Endothelial cell of umbilical vein (primary cell): ENCODE measurements at regions of chr15 and their contacts with region 1.

Region 1: DNA sequence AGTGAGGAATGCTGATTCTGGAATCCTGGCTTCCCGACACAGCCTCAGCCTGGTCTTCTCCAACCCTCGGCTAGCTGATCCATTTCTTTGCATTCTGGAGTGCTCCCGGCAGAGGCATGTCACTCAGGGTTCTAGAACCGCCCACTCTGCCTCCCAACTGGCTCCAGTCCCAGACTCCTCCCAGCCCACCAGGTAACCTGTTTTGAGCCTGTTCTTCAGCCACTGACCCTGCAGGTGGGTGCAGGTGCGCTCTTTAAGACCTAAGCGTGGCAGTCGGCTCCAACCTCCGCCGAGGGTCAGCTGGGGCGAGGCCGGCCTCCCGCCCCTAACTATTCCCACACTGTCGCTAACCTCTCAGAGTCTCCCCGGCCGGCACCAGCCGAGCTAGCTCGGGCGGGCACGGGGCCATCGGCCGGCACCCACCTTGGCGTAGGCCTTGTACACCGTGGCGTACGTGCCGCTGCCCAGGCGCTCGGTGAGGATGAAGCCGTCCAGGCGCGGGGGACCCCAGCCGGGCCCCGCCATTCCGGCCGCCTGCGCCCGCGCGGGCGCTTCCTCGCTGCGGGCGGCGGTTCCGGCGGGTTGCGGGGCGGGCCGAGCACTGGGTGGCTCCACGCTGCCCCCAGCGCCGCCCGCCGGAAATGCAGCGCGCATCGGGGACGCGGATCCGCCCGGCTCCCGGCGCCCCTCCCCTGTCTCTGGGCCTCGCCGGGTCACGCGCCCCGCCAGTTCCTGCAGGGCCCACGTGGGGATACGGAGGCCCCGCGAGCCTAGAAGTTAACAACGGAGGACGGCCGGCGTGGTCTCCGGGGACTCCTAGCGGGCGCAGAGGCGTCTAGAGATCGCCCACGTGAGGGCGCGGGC is at the start of gene ULK3:
- DNase-seq: peak; percentile 81
- H3K4me3 ChIP-seq: peak within 1 kb of the TSS; percentile 61 to 81 (median 71)
- H3K27ac ChIP-seq: peak within 1 kb of the TSS; percentile 60
- H3K4me1 ChIP-seq: peaks cover 11% of the 10 kb centered on the region
- H3K27me3 ChIP-seq: no peaks in the 10 kb centered on the region
- CTCF ChIP-seq: peak; percentile 36 to 57
- POLR2A ChIP-seq: peak; percentile 88
- total RNA-seq, gene ULK3: 29.0 and 36.0 TPM in 2 replicates

Region 2: DNA sequence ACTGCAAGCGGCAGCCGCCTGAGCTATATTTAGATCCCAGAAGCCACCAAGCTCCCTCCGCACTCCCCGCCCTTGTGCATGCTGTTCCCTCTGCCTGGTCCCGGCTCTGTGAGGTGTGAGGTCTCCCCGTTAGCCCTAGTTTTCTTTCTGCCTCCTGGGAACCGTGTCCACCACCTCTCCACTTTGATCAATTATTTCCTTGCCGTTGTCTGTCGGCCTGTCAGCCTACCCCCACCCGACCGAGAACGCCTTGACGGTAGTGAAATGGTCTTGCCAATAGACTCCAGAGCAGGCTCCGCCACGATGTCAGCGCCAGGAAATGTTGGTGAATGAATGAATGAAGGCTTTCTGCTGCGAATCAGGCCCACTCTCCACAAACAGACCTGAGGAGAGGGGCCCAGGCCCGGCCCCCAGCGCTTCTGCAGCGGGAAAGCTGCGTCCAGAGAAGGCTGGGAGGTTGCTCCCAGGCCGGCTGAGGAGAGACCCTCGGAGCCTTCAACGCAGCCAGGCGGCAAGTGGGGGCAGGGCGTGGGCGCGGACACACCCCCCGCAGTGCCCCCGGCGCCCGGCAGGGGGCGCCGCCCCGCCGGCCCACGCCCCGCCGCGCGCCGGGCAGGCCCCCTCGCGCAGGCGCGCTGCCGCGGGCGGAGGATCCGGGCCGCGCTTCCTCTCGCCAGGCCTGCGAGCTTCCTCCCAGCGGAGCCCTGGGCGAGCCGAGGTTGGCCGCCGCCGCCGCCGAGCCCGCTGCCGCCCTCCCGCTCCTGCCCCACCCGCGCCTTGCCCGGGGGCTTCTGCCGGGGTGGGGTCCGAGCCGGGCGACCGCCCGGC is 61.2 kb before region 1 on chr15 and contains the start of gene CSK:
- CTCF ChIA-PET with region 1: interaction called, 3 read pairs
- POLR2A ChIA-PET with region 1: interaction called, 4 read pairs
- dilution Hi-C with region 1: no loop called
- intact Hi-C with region 1: loop called (anchors 2 kb)
- DNase-seq: peak; percentile 53
- H3K4me3 ChIP-seq: peak within 1 kb of the TSS; percentile 88 to 94 (median 90)
- H3K27ac ChIP-seq: peak within 1 kb of the TSS; percentile 62
- H3K4me1 ChIP-seq: peaks cover 37% of the 10 kb centered on the region
- H3K27me3 ChIP-seq: no peaks in the 10 kb centered on the region
- CTCF ChIP-seq: peak; percentile 52 to 65
- POLR2A ChIP-seq: peak; percentile 67
- total RNA-seq, gene CSK: 89.1 and 104 TPM in 2 replicates

Region 3: GRCh38 chr15:74873036-74873755 is 30.4 kb after region 1 on chr15 and contains the start of gene SCAMP2:
- CTCF ChIA-PET with region 1: interaction called, 15 read pairs
- POLR2A ChIA-PET with region 1: no interaction called
- dilution Hi-C with region 1: no loop called
- intact Hi-C with region 1: loop called (anchors 1 kb)
- DNase-seq: peak; percentile 96
- H3K4me3 ChIP-seq: peak within 1 kb of the TSS; percentile 42 to 77 (median 72)
- H3K27ac ChIP-seq: peak within 1 kb of the TSS; percentile 89
- H3K4me1 ChIP-seq: peaks cover 34% of the 10 kb centered on the region
- H3K27me3 ChIP-seq: peaks cover 3% of the 10 kb centered on the region in 2 experiments
- CTCF ChIP-seq: no peak
- POLR2A ChIP-seq: peak; percentile 93
- total RNA-seq, gene SCAMP2: 61.1 and 67.3 TPM in 2 replicates

Region 4: DNA sequence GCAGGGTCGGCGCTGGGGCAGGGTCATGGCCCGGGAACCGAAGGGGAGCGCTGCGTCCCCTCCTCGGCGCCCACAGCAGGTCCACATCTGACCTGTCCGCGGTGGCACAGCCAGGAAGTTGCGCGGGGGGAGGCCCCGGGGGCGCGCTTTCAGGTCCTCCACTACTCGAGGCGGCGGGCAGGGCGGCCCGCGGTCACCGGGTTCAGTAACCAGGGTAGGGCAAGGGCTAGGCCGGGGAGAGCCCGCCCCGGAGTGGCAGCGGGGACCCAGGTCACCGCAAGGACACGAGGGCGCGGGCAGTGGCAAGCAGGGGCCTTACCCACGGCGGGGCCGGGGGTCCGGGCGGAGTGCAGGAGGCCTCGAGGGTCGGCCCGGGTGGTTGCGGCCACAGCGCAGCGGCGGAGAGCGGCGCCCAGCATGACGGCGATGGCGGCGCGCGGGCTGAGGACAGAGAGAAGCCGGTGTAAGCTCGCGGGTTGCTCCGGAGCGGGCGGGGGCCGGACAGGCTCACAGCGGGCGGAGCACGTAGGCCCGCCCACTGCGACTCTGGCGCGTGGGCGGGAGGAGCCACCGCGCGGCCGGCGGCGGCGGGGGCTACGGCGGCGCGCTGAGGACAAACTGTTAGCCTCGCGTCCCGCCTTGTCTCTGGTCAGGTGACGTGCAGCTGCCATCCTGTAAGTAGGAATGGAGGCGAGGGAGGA is 94.9 kb after region 1 on chr15 and contains the start of gene COX5A:
- CTCF ChIA-PET with region 1: no interaction called
- POLR2A ChIA-PET with region 1: no interaction called
- dilution Hi-C with region 1: no loop called
- intact Hi-C with region 1: loop called (anchors 5 kb)
- DNase-seq: peak; percentile 98
- H3K4me3 ChIP-seq: peak within 1 kb of the TSS; percentile 92 to 99 (median 99)
- H3K27ac ChIP-seq: peak within 1 kb of the TSS; percentile 60
- H3K4me1 ChIP-seq: peaks cover 7% of the 10 kb centered on the region
- H3K27me3 ChIP-seq: no peaks in the 10 kb centered on the region
- CTCF ChIP-seq: no peak
- POLR2A ChIP-seq: peak; percentile 82
- total RNA-seq, gene COX5A: 220 and 232 TPM in 2 replicates

Region 5: GRCh38 chr15:75302318-75302717 is 459.5 kb after region 1 on chr15:
- CTCF ChIA-PET with region 1: no interaction called
- POLR2A ChIA-PET with region 1: no interaction called
- dilution Hi-C with region 1: no loop called
- intact Hi-C with region 1: no loop called
- DNase-seq: no peak
- H3K4me3 ChIP-seq: no peak overlapping the region
- H3K27ac ChIP-seq: no peak overlapping the region
- H3K4me1 ChIP-seq: no peaks in the 10 kb centered on the region
- H3K27me3 ChIP-seq: peaks cover 11 to 17% of the 10 kb centered on the region in 2 experiments
- CTCF ChIP-seq: no peak
- POLR2A ChIP-seq: no peak